ENCODE measurements at regions of chr2 and their contacts with region 1.

Region 1: DNA sequence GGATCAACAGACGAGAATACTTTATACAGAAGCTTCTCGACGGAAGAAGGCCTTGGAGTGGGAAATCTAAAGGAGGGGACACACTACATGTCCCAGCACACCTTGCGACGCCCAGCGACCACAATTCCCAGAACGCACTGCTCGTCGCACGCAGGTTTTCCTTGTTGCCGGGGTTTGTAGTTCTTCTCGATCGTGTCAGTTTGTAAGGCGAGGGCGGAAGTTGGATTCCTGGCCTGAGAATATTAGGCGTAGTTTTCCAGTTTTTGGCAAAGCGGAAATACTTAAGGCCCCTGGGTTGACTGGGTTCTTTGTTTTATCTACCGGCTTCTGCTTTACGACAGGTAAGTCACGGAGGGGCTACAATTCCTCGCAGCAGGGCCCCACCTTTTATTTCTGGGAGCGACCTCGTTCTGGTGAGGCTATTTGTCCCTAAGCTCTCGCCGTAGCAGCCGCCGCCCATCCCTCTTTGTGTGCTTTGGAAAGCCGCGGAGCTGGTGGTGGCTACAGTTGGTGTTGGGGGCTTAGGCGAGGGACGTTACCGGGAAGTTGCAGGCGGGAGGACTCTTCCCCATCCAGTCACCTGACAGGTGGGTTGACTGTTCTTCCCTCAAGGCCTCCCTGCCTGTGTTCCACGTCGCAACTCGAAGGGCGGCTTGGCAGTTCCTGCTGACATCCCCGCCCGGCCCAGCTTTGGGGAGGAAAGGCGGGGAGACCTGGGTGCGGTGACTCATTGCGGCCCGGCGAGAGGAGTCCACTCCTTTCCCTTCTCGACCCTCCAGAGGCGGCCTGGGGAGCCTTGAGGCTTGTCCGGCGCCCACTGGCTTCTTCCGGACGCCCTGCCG is at the start of gene DYNC1I2:
- DNase-seq: peak; percentile 88 to 98 (median 94)

Region 2: DNA sequence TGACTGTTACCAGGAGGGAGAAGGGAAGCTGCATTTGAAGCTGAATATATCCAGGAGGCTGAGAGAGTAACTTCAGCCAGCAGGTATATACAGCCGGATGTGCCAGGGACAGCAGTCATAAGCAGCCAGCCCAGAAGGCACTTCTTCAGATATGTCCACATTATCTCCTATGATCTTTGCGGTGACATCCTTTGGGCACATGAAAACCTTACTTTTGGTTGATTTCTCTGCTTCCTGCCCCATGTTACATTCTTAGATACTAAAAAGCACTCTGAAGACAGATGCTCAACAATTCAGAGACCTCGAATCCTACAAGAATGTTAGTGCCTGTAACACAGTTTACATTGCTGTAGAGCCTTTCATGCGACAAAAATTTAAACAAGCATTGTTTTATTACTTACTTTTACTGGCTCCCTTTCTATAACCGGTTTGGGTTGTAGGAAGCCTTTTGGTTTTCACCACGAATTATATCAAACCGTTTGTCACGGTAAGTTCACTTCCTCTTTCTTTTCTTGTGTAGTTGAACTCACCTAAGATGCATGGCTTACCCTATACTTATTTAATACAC is 476.6 kb before region 1 on chr2:
- intact Hi-C with region 1: no loop called
- DNase-seq: no peak

Region 3: GRCh38 chr2:171574149-171574795 is 113.2 kb before region 1 on chr2:
- intact Hi-C with region 1: loop called (anchors 10 kb)
- DNase-seq: peak; percentile 28 to 91 (median 76)

Region 4: GRCh38 chr2:171598713-171599319 is 88.7 kb before region 1 on chr2:
- intact Hi-C with region 1: loop called (anchors 5 kb)
- DNase-seq: peak in 38 of 42 donors; percentile 19 to 86 (median 57)

Measured in head of caudate nucleus (tissue), 42 donors.